AG04449 (cell line): ENCODE measurements at regions of chr10 and their contacts with region 1.

Region 1: DNA sequence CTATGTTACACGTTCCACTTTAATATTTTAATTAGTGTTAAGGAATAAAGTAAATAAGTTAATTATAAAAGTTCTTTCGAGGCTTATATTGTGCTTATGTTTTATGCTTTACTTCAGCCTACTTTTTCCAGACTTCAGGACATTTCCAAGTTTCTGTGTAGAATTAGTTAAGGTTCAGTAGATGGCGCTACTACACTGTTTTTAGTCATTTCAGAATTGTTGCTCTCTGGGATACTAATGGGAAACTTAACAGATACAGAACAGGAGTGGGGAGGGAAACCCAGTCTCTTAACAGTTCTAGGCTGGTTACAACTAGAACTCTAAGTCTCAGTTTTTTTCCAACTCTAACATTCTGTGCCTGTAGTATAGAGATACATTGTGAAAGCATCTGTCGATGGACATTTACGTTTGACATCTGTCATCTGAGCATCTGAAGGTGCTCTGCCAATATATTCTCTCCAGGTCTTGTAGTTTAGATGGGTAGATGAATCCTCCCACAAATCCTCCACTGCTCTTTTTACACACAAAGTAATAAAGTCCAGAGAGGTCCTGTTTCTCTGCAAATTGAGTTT is 56.8 kb upstream of the FAM171A1 start:
- DNase-seq: no peak
- H3K4me3 ChIP-seq: no peak overlapping the region
- CTCF ChIP-seq: peak; percentile 29

Region 2: GRCh38 chr10:15744217-15744865 is 316.4 kb after region 1 on chr10:
- CTCF ChIA-PET with region 1: interaction called, 17 read pairs
- POLR2A ChIA-PET with region 1: no interaction called
- DNase-seq: no peak
- H3K4me3 ChIP-seq: no peak overlapping the region
- CTCF ChIP-seq: peak; percentile 57

Region 3: GRCh38 chr10:15824498-15824897 is 396.6 kb after region 1 on chr10:
- CTCF ChIA-PET with region 1: interaction called, 18 read pairs
- POLR2A ChIA-PET with region 1: no interaction called
- DNase-seq: no peak
- H3K4me3 ChIP-seq: no peak overlapping the region
- CTCF ChIP-seq: peak; percentile 11